CD4-positive, alpha-beta memory T cell (primary cell): ENCODE measurements at regions of chr2 and their contacts with region 1.

Region 1: GRCh38 chr2:175234153-175234552 is 52.6 kb upstream of the ATP5MC3 start:
- DNase-seq: no peak
- H3K4me3 ChIP-seq: no peak overlapping the region
- H3K4me3 Mint-ChIP-seq: no peak overlapping the region
- H3K27ac ChIP-seq: no peak overlapping the region
- H3K27ac Mint-ChIP-seq: no peak overlapping the region
- H3K4me1 ChIP-seq: no peaks in the 10 kb centered on the region
- H3K4me1 Mint-ChIP-seq: no peaks in the 10 kb centered on the region
- H3K27me3 ChIP-seq: no peaks in the 10 kb centered on the region
- H3K27me3 Mint-ChIP-seq: peaks cover 3 to 6% of the 10 kb centered on the region in 2 donors

Region 2: GRCh38 chr2:175251425-175252041 is 17.4 kb after region 1 on chr2:
- CTCF ChIA-PET with region 1: interaction called, 10 read pairs
- POLR2A ChIA-PET with region 1: no interaction called
- intact Hi-C with region 1: no loop called
- DNase-seq: peak in 3 of 5 donors; percentile 8 to 27 (median 10)
- H3K4me3 ChIP-seq: no peak overlapping the region
- H3K4me3 Mint-ChIP-seq: no peak overlapping the region
- H3K27ac ChIP-seq: no peak overlapping the region
- H3K27ac Mint-ChIP-seq: no peak overlapping the region
- H3K4me1 ChIP-seq: no peaks in the 10 kb centered on the region
- H3K4me1 Mint-ChIP-seq: peaks cover 0 to 4% (median 2%) of the 10 kb centered on the region in 4 donors
- H3K27me3 ChIP-seq: no peaks in the 10 kb centered on the region
- H3K27me3 Mint-ChIP-seq: peaks cover 10 to 11% of the 10 kb centered on the region in 2 donors

Region 3: GRCh38 chr2:175742367-175742766 is 508.2 kb after region 1 on chr2:
- CTCF ChIA-PET with region 1: no interaction called
- POLR2A ChIA-PET with region 1: no interaction called
- intact Hi-C with region 1: no loop called
- DNase-seq: no peak
- H3K4me3 ChIP-seq: no peak overlapping the region
- H3K4me3 Mint-ChIP-seq: no peak overlapping the region
- H3K27ac ChIP-seq: no peak overlapping the region
- H3K27ac Mint-ChIP-seq: no peak overlapping the region
- H3K4me1 ChIP-seq: no peaks in the 10 kb centered on the region
- H3K4me1 Mint-ChIP-seq: no peaks in the 10 kb centered on the region
- H3K27me3 ChIP-seq: no peaks in the 10 kb centered on the region
- H3K27me3 Mint-ChIP-seq: peaks cover 3 to 10% of the 10 kb centered on the region in 2 donors